HEK293 (cell line): ENCODE measurements at regions of chr11 and their contacts with region 1.

Region 1: DNA sequence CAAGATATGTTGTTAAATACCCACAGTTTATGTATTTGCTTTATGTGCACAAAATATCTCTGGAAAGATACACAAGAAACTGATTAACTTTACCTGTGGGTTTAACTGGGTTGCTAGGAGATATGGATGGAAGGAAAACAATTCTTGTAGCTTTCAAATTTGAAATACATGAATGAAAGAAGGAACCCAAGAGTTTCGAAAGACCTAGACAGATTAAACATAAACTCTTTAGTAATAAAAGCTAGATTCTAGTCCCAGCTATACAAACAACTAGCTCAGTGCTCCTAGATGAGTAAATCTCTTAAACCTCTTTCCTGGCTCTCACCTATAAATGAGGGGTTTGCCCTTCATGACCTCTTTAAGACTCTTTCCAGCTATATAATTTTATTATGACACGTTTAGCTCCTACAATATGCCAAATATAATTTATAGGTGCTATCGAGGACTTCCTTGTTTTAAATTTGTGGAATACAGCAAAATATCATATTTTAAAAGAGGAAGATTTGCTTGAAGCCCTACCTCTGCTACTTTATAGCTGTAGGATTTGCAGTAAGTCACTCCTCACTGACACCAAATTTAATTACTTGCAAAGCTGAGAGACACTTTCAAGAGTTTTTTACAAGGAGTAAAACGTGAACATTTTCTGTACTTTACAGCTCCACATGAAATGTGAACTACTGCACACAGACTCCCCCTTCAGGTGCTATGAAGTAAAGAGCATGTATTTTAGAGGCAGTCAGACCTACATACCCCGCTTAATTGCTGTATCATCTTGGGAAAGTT is 50.7 kb downstream of the RRAS2 start:
- H3K4me3 ChIP-seq: no peak overlapping the region
- H3K27ac ChIP-seq: no peak overlapping the region
- H3K4me1 ChIP-seq: no peaks in the 10 kb centered on the region
- CTCF ChIP-seq: no peak

Region 2: GRCh38 chr11:14288189-14288935 is 19.9 kb before region 1 on chr11:
- CTCF ChIA-PET with region 1: no interaction called
- POLR2A ChIA-PET with region 1: no interaction called
- H3K4me3 ChIP-seq: no peak overlapping the region
- H3K27ac ChIP-seq: no peak overlapping the region
- H3K4me1 ChIP-seq: no peaks in the 10 kb centered on the region
- CTCF ChIP-seq: no peak

Region 3: DNA sequence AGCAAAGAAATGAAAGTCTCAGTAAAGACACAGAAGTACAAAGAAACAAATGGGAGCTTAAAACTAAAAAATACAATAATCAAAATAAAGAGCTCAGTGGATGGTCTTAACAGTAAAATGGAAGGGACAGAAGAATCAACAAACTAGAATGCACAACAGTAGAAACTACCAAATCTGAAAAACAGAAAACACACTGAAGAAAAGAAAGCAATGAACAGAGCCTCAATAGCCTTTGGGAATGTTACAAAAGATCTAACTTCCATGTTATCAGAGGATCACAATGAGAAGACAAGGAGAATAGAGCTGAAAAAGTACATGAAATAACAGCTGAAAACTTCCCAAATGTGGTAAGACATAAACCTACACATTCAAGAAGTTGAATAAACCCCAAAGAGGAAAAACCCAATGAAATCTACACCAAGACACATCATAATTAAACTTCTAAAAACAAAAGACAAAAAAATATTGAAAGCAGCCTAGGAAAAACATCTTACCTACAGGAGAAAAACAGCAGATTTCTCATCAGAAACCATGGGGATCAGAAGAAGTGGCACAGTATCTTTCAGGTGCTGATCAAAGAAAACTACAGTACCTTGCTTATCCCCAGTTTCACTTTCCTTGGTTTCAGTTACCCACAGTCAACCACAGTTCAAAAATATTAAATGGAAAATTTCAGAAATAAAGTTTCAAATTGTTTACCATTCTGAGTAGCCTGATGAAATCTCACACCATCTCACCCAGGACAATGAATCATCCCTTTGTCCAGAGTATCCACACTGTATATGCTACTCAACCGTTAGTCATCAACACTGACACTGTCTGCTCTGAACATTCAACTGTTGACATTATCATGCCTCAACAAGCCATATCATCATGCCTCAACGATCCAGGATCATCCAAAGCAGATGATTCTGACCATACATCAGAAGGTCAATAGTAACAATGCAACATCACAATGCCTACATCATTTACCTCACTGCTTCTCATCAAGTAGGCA is 28.5 kb after region 1 on chr11:
- CTCF ChIA-PET with region 1: interaction called, 10 read pairs
- POLR2A ChIA-PET with region 1: no interaction called
- H3K4me3 ChIP-seq: no peak overlapping the region
- H3K27ac ChIP-seq: no peak overlapping the region
- H3K4me1 ChIP-seq: no peaks in the 10 kb centered on the region
- CTCF ChIP-seq: no peak